Cardiac septum (tissue), 1 donor: ENCODE measurements at regions of chr1 and their contacts with region 1.

Region 1: GRCh38 chr1:221035680-221036153 is 156.5 kb downstream of the HLX start:
- DNase-seq: no peak

Region 2: DNA sequence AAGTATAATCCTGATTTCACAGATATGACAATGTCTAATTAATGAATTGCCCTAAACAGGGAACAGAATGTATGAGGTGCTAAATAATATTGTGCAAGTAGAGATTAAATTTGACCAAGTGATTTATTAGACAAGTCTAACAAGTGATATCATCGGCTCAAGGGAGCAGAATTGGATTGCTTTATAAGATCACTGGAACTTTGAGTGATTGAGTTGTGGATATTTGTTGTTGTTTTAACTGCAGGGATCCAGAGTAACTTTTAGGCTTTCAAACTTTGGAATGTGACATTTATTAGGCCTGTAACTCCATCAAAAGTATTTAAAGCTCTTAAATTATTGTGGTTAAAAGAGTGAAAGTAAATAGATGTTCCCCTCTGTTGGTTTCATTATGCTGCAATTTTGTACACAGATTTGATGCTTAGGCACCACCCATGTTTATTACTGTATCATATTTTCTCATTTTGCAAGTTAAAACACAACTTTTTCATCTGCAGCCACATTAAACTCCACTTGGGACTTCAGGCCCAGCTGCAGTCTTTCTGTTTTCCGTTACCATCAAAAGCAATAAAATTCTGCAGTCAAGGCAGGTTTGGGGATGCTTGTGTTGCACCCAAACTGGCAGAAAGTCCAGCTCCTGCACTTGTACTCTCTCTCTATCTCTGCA is 50.1 kb after region 1 on chr1:
- intact Hi-C with region 1: no loop called
- DNase-seq: no peak

Region 3: DNA sequence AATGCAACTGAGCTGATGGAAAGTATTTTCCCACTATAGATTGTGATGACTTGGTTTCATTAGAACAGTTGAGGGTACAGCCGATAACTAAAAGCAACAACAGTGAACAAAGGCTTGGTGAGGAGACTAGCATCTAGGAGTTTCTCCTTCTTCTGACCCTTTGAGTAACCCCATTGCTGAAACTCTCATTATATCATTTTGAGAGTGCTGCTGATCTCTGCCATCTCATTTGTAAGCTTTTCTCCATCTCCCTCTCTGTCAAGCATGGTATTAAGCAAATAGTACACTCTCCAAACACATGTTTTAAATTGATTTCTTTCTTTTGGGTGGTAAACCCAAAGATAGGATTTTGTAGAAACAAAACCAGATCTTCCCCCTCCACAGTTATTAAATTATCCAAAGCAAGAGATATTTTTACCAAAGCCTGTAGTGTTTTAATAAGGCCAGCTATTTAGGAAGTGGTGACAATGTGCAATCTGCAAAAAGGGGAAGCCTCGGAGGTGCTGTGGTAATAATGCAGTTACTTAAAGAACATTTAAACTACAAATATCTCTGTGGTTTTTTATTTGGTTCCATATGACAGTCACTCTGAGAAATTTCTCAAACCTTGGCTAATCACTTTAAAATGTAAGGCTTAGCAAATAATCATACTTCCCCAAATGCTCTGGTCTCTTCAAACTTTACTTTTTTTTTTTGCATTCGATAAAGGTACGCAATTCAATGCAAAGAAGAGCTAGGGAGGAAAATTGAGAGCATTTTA is 131.0 kb after region 1 on chr1:
- intact Hi-C with region 1: loop called (anchors 10 kb)
- DNase-seq: no peak